Heart right ventricle (tissue), 16 donors: ENCODE measurements at regions of chr4 and their contacts with region 1.

Region 1: DNA sequence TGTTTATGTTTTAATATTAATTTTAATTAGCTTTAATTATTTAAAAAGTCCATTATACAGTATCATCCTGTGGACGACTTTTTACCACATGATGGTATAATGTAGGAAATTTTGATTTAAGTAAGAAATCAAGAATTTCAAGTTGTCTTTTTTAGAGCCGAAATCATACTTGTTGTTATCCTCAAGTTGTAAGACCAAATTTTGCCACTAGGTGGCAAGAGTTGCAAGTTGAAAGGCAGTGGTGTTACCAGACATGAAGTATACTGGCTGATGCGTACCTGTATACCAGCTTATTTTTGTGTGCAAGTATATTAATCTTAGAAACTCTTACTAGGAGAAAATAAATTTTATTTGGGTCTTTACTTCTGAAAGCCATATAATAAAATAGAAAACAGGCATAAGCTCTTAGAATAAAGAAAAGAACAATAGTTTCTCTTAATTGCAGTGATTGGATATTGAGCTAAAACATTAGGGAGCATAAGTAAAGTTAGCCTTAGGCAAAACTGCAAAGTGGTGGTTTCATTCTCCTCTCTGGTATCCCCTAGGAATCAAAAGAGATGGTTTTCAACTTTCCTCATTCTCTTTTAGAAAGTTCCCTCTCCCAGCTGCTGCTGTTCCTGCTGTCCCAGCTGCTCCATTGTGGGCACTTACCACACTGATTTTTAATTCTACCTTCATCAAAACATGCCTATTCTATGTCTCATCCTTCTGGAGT is 118.0 kb upstream of the WDFY3 start:
- DNase-seq: peak in 1 of 2 donors; percentile 55
- ATAC-seq: peak in 4 of 8 donors; percentile 48 to 73 (median 59)
- H3K4me3 ChIP-seq: no peak overlapping the region
- H3K27ac ChIP-seq: no peak overlapping the region
- H3K4me1 ChIP-seq: peaks cover 0 to 6% (median 0%) of the 10 kb centered on the region in 9 donors
- H3K27me3 ChIP-seq: peaks cover 0 to 3% (median 0%) of the 10 kb centered on the region in 7 donors
- CTCF ChIP-seq: peak; percentile 52 to 85 (median 72)

Region 2: DNA sequence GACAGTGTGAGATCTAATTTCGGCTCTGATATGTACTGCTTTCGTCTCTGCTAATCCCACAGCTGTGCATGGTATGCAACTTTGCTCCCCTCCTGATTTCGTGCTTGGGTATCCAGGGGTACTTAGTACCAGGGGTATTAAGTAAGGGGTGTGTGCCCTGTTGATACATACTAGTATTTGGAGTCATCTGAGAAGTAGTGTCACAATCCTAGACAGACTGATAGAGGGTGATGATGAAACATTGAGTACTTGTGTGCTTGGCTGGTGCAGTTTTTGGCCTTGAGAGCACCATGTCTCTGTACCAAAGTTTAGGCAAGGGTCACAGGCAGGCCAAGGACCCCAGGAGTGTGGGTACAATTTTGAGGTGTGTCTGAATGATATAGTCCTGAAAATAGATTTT is 1537.8 kb before region 1 on chr4:
- intact Hi-C with region 1: no loop called
- DNase-seq: no peak
- ATAC-seq: peak in 7 of 8 donors; percentile 21 to 85 (median 42)
- H3K4me3 ChIP-seq: no peak overlapping the region
- H3K27ac ChIP-seq: peak overlapping the region in 8 of 10 donors; percentile 29 to 96 (median 53)
- H3K4me1 ChIP-seq: peaks cover 0 to 51% (median 10%) of the 10 kb centered on the region in 9 donors
- H3K27me3 ChIP-seq: no peaks in the 10 kb centered on the region
- CTCF ChIP-seq: no peak

Region 3: DNA sequence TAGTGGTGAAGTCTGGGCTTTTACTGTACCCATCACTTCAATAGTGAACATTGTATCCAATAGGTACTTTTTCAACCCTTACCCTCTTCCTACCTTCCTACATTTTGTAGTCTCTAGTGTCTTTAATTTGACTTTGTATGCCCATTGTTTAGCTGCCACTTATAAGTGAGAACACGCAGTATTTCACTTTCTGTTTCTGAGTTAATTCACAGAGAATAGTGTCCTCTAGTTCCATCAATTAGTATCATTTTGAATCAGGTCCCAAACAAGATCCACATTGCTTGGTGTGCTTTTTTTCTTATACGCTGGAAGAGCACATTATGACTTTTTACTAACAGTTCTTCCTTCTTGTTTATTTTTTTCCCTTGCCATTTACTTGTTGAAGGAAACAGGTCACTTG is 57.9 kb after region 1 on chr4:
- intact Hi-C with region 1: loop called in 4 of 10 experiments (anchors 5 to 10 kb)
- DNase-seq: no peak
- ATAC-seq: peak in 1 of 8 donors; percentile 24
- H3K4me3 ChIP-seq: no peak overlapping the region
- H3K27ac ChIP-seq: peak overlapping the region in 5 of 10 donors; percentile 10 to 48 (median 23)
- H3K4me1 ChIP-seq: peaks cover 0 to 3% (median 2%) of the 10 kb centered on the region in 9 donors
- H3K27me3 ChIP-seq: no peaks in the 10 kb centered on the region
- CTCF ChIP-seq: no peak

Region 4: DNA sequence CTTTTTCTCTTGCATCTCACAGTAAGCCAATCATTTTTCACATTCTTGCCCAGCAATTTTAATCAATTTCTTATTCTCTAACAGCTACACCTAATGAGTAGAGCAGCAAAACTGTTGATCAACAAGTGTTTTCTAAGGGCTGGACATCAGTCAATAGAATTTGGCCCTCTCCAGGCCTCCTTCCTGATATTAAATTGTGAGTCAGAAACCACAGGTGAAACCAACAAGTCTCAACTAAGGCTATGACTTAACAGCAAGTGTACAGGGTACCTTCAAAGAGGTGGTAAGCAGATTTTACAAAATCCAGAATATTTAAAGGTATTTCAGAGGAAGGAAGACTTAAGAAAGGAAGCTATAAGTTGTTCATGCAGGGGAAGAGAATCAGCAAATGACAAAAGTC is 233.9 kb after region 1 on chr4:
- intact Hi-C with region 1: loop called in 1 of 10 experiments (anchors 5 kb)
- DNase-seq: no peak
- ATAC-seq: no peak
- H3K4me3 ChIP-seq: no peak overlapping the region
- H3K27ac ChIP-seq: no peak overlapping the region
- H3K4me1 ChIP-seq: peaks cover 0 to 18% (median 0%) of the 10 kb centered on the region in 9 donors
- H3K27me3 ChIP-seq: no peaks in the 10 kb centered on the region
- CTCF ChIP-seq: peak in 3 of 9 donors; percentile 16 to 39 (median 25)

Region 5: DNA sequence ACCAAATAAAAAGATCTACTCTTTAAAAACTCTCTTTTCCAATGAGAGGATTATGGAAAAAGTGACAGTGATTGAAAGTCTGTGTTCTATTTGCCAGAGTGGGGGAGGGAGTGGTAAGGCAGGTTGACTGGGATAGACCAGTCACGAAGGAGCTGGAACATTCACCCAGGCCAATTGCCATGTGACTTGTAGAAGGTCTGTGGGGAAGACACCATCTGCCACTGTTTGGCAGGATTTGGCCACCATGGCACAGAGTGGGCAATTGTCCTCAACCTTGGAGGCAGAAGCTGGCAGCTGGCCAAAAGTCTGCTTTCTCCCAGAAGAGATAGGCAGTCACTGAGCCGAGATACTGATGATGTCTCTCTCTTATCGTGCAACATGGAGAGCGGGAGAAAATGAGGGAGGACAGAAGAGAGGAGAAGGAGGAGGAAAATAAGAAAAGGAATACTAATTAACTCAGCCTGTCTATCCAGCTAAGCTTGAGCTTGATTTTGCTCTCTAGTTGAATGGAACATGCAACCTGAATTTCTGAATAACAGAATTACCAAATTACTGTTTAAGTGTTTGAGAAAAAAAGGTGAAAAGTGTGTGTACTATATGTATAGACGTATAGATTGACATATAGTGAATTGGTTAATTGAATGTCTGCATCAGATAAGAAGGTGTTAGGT is 657.5 kb after region 1 on chr4:
- intact Hi-C with region 1: loop called in 6 of 10 experiments (anchors 5 to 10 kb)
- DNase-seq: peak; percentile 36 to 39
- ATAC-seq: peak in 6 of 8 donors; percentile 34 to 82 (median 46)
- H3K4me3 ChIP-seq: no peak overlapping the region
- H3K27ac ChIP-seq: peak overlapping the region in 6 of 10 donors; percentile 15 to 89 (median 32)
- H3K4me1 ChIP-seq: peaks cover 0 to 62% (median 19%) of the 10 kb centered on the region in 9 donors
- H3K27me3 ChIP-seq: no peaks in the 10 kb centered on the region
- CTCF ChIP-seq: no peak

Region 6: GRCh38 chr4:85968945-85969819 is 884.6 kb after region 1 on chr4:
- intact Hi-C with region 1: loop called in 3 of 10 experiments (anchors 5 to 10 kb)
- DNase-seq: no peak
- ATAC-seq: peak in 6 of 8 donors; percentile 55 to 68 (median 66)
- H3K4me3 ChIP-seq: no peak overlapping the region
- H3K27ac ChIP-seq: no peak overlapping the region
- H3K4me1 ChIP-seq: peaks cover 0 to 50% (median 26%) of the 10 kb centered on the region in 9 donors
- H3K27me3 ChIP-seq: no peaks in the 10 kb centered on the region
- CTCF ChIP-seq: peak; percentile 33 to 79 (median 66)

Region 7: GRCh38 chr4:86043755-86044592 is 959.4 kb after region 1 on chr4:
- intact Hi-C with region 1: loop called in 9 of 10 experiments (anchors 2 to 10 kb)
- DNase-seq: peak in 1 of 2 donors; percentile 46
- ATAC-seq: peak in 5 of 8 donors; percentile 53 to 79 (median 55)
- H3K4me3 ChIP-seq: no peak overlapping the region
- H3K27ac ChIP-seq: no peak overlapping the region
- H3K4me1 ChIP-seq: peaks cover 0 to 7% (median 0%) of the 10 kb centered on the region in 9 donors
- H3K27me3 ChIP-seq: no peaks in the 10 kb centered on the region
- CTCF ChIP-seq: peak; percentile 55 to 83 (median 70)